Gastrocnemius medialis (tissue), 4 donors: ENCODE measurements at regions of chr5 and their contacts with region 1.

Region 1: GRCh38 chr5:95961617-95962474 is at the start of gene ELL2:
- DNase-seq: peak; percentile 96 to 98
- ATAC-seq: peak; percentile 77 to 80
- H3K4me3 ChIP-seq: peak within 1 kb of the TSS; percentile 76 to 97 (median 89)
- H3K27ac ChIP-seq: peak within 1 kb of the TSS; percentile 91 to 99 (median 98)
- H3K4me1 ChIP-seq: peaks cover 17 to 26% of the 10 kb centered on the region in 2 donors
- H3K27me3 ChIP-seq: no peaks in the 10 kb centered on the region
- CTCF ChIP-seq: no peak
- POLR2A ChIP-seq: peak; percentile 91 to 95
- total RNA-seq, gene ELL2: 35.2 to 64.5 (median 42.9) TPM

Region 2: DNA sequence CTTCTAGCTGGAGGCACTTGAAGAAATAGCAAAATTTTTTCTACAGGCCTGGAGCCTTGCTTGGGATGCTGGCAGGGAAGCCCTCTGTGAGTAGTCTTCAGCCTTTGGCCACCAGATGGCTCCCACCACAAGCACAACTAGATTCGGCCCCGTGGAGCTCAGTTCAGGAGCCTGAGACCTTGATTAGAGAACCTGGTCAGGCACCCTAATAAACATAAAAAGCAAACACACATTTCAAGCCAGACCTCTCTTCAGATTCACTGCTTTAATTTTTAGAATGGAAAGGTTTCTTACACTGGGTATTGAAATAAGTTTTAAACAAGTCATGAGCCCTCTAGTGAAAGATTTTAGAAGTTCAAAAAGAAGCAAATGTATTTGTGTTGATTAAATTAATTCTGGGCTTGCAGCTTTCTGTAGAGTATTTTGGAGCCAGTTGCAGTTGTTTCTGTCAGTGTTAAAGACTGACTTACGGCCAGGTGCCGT is 180.7 kb before region 1 on chr5:
- in situ Hi-C with region 1: loop called in 1 of 4 experiments (anchors 10 kb)
- intact Hi-C with region 1: loop called (anchors 5 kb)
- DNase-seq: peak; percentile 77 to 88
- ATAC-seq: peak; percentile 75 to 87
- H3K4me3 ChIP-seq: no peak overlapping the region
- H3K27ac ChIP-seq: peak overlapping the region; percentile 76 to 85 (median 83)
- H3K4me1 ChIP-seq: peaks cover 18 to 72% of the 10 kb centered on the region in 2 donors
- H3K27me3 ChIP-seq: no peaks in the 10 kb centered on the region
- CTCF ChIP-seq: peak; percentile 87 to 95 (median 89)
- POLR2A ChIP-seq: no peak

Region 3: GRCh38 chr5:95915999-95916686 is 45.7 kb before region 1 on chr5:
- in situ Hi-C with region 1: no loop called
- intact Hi-C with region 1: loop called (anchors 5 kb)
- DNase-seq: no peak
- ATAC-seq: no peak
- H3K4me3 ChIP-seq: no peak overlapping the region
- H3K27ac ChIP-seq: no peak overlapping the region
- H3K4me1 ChIP-seq: peaks cover 22 to 33% of the 10 kb centered on the region in 2 donors
- H3K27me3 ChIP-seq: no peaks in the 10 kb centered on the region
- CTCF ChIP-seq: no peak
- POLR2A ChIP-seq: no peak

Region 4: GRCh38 chr5:96247097-96247701 is 285.4 kb after region 1 on chr5:
- in situ Hi-C with region 1: no loop called
- intact Hi-C with region 1: loop called (anchors 10 kb)
- DNase-seq: no peak
- ATAC-seq: peak; percentile 65 to 70
- H3K4me3 ChIP-seq: no peak overlapping the region
- H3K27ac ChIP-seq: peak overlapping the region in 3 of 4 donors; percentile 18 to 35 (median 29)
- H3K4me1 ChIP-seq: peaks cover 0 to 5% of the 10 kb centered on the region in 2 donors
- H3K27me3 ChIP-seq: no peaks in the 10 kb centered on the region
- CTCF ChIP-seq: no peak
- POLR2A ChIP-seq: no peak

Region 5: DNA sequence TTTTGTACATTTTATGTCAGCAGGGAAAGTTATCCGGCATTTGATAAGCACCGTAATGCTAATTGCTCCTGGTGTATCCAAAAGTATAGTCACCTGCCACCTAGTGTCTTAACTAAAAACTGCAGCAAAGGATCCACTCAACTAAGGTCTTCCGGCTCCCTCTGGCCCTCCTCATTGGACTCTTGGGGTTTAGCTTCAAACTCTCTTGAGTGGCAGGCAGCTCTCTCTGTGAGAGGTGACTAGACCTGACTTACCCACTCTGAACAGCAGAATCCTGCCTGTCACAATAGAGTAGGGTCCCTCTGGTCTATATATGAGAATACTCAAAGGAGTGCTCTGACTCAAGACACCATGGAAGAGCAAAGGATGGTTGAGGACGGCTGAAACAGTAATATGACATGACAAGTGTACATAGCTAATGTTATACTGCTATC is 640.0 kb after region 1 on chr5:
- in situ Hi-C with region 1: loop called in 1 of 4 experiments (anchors 25 kb)
- intact Hi-C with region 1: no loop called
- DNase-seq: peak in 1 of 2 donors; percentile 22
- ATAC-seq: peak; percentile 87 to 90
- H3K4me3 ChIP-seq: no peak overlapping the region
- H3K27ac ChIP-seq: no peak overlapping the region
- H3K4me1 ChIP-seq: no peaks in the 10 kb centered on the region
- H3K27me3 ChIP-seq: no peaks in the 10 kb centered on the region
- CTCF ChIP-seq: peak; percentile 63 to 86 (median 75)
- POLR2A ChIP-seq: no peak